Psoas muscle (tissue), 8 donors: ENCODE measurements at regions of chr5 and their contacts with region 1.

Region 1: DNA sequence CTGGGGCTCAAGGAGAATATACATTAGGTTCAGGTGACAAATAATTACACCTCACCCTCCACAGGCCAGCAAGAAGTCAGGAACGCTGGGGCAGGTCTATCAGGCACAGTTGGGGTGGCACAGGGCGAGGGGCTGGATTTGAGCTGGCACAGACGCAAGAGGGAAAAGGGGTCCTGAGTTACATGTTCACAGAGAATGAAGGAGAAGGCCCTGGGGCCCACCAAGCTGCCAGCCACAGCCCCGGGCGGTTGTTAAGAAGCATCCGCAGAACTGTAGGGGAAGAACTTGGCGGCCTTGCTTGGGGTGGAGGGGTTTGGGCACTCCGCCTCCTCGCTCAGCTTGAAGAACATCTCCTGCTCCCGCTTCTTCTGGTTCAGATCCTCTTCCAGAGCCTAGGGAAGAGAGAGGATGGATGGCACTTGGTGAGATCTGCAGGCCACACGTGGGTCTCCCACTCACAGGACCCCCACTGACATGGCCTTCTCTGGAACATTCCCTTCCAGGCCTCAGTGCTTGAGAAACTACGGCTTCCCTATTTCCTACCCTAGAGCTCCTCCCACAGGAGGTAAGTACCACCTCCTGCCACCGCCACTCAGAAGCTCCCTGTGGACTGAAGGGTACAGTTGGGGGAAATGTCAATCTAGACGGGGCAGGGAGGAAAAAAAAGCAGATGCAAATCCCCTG is 38.3 kb upstream of the FBXW11 start:
- DNase-seq: no peak
- ATAC-seq: no peak
- H3K4me3 ChIP-seq: no peak overlapping the region
- H3K27ac ChIP-seq: no peak overlapping the region
- H3K4me1 ChIP-seq: peaks cover 5% of the 10 kb centered on the region
- H3K27me3 ChIP-seq: no peaks in the 10 kb centered on the region
- CTCF ChIP-seq: no peak

Region 2: GRCh38 chr5:171907725-171908343 is 136.9 kb before region 1 on chr5:
- intact Hi-C with region 1: loop called (anchors 1 to 5 kb)
- DNase-seq: no peak
- ATAC-seq: peak; percentile 71 to 88 (median 80)
- H3K4me3 ChIP-seq: no peak overlapping the region
- H3K27ac ChIP-seq: no peak overlapping the region
- H3K4me1 ChIP-seq: peaks cover 8% of the 10 kb centered on the region
- H3K27me3 ChIP-seq: no peaks in the 10 kb centered on the region
- CTCF ChIP-seq: peak; percentile 80